Mammary epithelial cell (primary cell): ENCODE measurements at regions of chr7 and their contacts with region 1.

Region 1: DNA sequence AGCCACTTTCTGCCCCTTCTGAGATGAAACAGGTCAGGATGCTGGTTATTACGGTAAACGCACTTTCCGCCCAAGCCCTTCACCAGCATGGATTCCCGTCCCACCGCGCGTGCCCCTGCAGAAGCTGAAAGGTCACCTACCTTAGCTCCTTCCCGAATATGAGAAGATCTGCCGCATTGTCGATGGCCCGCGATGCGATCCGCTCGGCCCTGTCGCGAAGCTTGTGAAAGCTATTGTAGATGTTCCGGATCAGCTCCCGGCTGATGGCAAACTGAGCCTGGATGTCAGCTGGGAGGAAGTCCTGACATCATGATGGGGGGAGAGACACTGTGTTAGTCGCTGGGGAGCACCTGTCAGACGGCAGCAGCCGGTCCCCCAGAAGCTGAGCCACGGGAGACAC is 22.1 kb downstream of the NUDT1 start:
- DNase-seq: no peak
- H3K4me3 ChIP-seq: no peak overlapping the region
- H3K27ac ChIP-seq: no peak overlapping the region
- H3K4me1 ChIP-seq: peaks cover 9% of the 10 kb centered on the region
- H3K27me3 ChIP-seq: no peaks in the 10 kb centered on the region
- CTCF ChIP-seq: no peak

Region 2: DNA sequence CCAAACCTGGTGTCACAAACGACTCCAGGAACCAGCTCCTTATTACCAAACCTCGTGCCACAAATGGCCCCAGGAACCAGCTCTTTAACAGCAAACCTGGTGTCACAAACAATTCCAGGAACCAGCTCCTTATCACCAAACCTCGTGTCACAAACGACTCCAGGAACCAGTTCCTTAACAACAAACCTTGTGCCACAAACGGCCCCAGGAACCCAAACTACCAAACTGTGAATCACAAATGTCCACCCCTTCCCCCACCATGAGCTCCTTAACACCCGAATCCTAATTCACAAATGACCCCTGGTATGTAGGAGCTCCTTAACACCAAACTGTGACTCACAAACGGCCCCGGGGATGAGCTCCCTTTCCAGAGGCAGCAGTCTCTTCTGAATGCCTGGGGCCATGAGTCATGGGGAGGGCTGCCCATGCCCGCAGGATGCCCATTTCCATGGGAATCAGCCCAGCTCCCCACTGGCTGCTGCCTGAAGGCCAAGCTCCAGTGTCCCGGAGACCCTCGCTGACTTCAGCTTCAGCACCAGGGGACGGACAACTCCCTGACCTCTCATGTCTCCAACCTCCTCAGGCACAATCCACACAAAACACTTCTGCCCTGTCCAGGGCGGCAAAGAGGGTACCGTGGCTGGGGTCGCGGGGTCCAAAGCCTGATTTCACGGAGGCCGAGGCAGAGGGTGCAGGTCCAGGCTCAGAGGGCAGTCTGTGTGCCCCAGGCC is 381.0 kb before region 1 on chr7:
- CTCF ChIA-PET with region 1: interaction called, 18 read pairs
- dilution Hi-C with region 1: no loop called
- in situ Hi-C with region 1: no loop called
- intact Hi-C with region 1: no loop called
- DNase-seq: peak; percentile 75
- H3K4me3 ChIP-seq: no peak overlapping the region
- H3K27ac ChIP-seq: no peak overlapping the region
- H3K4me1 ChIP-seq: peaks cover 47% of the 10 kb centered on the region
- H3K27me3 ChIP-seq: no peaks in the 10 kb centered on the region
- CTCF ChIP-seq: no peak